ENCODE measurements at regions of chr5 and their contacts with region 1.

Region 1: GRCh38 chr5:126776497-126777256 is at the start of gene LMNB1:
- DNase-seq: peak; percentile 96
- H3K4me3 ChIP-seq: peak within 1 kb of the TSS; percentile 63 to 74 (median 67)
- H3K27ac ChIP-seq: peak within 1 kb of the TSS; percentile 92 to 96 (median 94)
- H3K4me1 ChIP-seq: peaks cover 0 to 31% (median 18%) of the 10 kb centered on the region in 4 donors
- H3K27me3 ChIP-seq: no peaks in the 10 kb centered on the region
- CTCF ChIP-seq: peak in 2 of 5 experiments; percentile 12 to 44
- EP300 ChIP-seq: no peak
- POLR2A ChIP-seq: peak; percentile 61
- total RNA-seq, gene LMNB1: 7.9 to 53.3 (median 16.8) TPM

Region 2: GRCh38 chr5:126339215-126339805 is 437.4 kb before region 1 on chr5:
- in situ Hi-C with region 1: loop called in 2 of 4 experiments (anchors 25 kb)
- intact Hi-C with region 1: no loop called
- DNase-seq: peak; percentile 38
- H3K4me3 ChIP-seq: no peak overlapping the region
- H3K27ac ChIP-seq: no peak overlapping the region
- H3K4me1 ChIP-seq: peaks cover 0 to 4% (median 0%) of the 10 kb centered on the region in 4 donors
- H3K27me3 ChIP-seq: no peaks in the 10 kb centered on the region
- CTCF ChIP-seq: peak; percentile 86 to 89 (median 88)
- EP300 ChIP-seq: no peak
- POLR2A ChIP-seq: no peak

Region 3: DNA sequence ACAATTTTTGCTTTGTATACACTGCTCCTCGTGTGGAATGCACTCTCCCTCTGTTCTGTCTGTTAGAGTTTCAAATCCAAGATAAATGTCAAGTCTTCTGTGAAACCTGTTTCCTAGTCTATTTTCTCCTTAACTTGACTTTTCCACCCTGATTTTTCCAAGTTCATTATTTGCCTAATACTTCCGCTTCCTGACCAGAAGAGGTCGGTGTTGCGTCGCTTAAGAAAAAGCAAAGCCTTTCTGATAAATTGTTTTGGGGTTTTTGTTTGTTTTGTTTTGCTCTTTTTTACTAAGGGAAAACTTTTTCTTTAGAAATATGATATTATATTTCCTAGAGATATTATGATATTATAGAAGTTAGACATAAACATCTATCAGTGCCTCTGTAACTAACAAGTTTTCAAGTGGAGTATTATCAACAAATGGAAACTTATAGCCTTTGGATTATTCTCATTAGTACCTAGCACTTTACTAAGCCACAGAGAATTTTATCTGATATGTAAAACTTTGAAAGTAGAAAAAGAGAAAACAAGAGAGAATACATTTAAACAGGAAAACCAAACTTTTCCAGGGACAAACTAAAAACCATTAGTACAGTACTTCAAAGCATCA is 120.2 kb before region 1 on chr5:
- in situ Hi-C with region 1: loop called in 1 of 4 experiments (anchors 25 kb)
- intact Hi-C with region 1: no loop called
- DNase-seq: no peak
- H3K4me3 ChIP-seq: no peak overlapping the region
- H3K27ac ChIP-seq: no peak overlapping the region
- H3K4me1 ChIP-seq: peaks cover 0 to 15% (median 5%) of the 10 kb centered on the region in 4 donors
- H3K27me3 ChIP-seq: no peaks in the 10 kb centered on the region
- CTCF ChIP-seq: peak; percentile 71 to 81 (median 79)
- EP300 ChIP-seq: no peak
- POLR2A ChIP-seq: no peak

Region 4: DNA sequence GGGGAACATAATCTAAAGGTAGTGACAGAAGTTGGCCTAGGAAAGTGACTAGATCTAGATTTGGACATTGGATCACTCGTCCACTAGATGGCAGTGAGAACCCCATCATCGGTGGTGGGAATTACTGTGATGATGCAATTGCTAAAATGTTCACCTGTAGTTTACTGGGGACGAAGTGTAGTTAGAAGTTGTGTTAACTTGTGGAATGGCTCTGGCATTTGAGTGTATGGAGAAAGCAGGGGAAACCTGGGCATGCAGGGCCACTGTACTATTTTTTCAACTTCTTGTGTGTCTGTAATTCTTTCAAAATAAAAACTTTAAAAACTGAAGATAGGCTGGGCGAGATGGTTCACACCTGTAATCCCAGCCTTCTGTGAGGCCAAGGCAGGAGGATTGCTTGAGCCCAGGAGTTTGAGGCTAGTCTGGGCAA is 100.5 kb before region 1 on chr5:
- in situ Hi-C with region 1: loop called in 3 of 4 experiments (anchors 5 to 25 kb)
- intact Hi-C with region 1: loop called (anchors 2 kb)
- DNase-seq: peak; percentile 69
- H3K4me3 ChIP-seq: no peak overlapping the region
- H3K27ac ChIP-seq: no peak overlapping the region
- H3K4me1 ChIP-seq: peaks cover 0 to 32% (median 8%) of the 10 kb centered on the region in 4 donors
- H3K27me3 ChIP-seq: no peaks in the 10 kb centered on the region
- CTCF ChIP-seq: peak; percentile 76 to 90 (median 80)
- EP300 ChIP-seq: no peak
- POLR2A ChIP-seq: no peak

Region 5: DNA sequence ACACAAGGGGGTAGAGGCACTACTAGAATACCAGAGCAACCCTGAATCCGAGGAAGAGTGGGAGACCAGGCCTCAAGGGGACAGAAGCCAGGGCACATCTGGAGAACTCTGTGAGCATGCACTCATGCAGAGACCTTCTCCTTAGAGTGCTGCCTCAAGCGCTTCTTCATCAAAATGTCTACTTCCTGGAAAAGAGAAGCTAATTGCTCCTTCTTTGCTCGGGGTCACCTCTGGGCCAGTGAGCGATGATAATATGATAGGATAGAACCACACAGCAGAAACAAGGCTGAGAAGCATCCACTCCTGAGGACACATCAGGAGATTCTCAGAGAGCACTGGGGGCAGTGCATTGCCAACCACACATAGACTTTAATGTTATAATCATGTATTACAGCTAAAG is 23.4 kb before region 1 on chr5:
- in situ Hi-C with region 1: no loop called
- intact Hi-C with region 1: no loop called
- DNase-seq: no peak
- H3K4me3 ChIP-seq: no peak overlapping the region
- H3K27ac ChIP-seq: no peak overlapping the region
- H3K4me1 ChIP-seq: no peaks in the 10 kb centered on the region
- H3K27me3 ChIP-seq: no peaks in the 10 kb centered on the region
- CTCF ChIP-seq: no peak
- EP300 ChIP-seq: no peak
- POLR2A ChIP-seq: no peak

Region 6: DNA sequence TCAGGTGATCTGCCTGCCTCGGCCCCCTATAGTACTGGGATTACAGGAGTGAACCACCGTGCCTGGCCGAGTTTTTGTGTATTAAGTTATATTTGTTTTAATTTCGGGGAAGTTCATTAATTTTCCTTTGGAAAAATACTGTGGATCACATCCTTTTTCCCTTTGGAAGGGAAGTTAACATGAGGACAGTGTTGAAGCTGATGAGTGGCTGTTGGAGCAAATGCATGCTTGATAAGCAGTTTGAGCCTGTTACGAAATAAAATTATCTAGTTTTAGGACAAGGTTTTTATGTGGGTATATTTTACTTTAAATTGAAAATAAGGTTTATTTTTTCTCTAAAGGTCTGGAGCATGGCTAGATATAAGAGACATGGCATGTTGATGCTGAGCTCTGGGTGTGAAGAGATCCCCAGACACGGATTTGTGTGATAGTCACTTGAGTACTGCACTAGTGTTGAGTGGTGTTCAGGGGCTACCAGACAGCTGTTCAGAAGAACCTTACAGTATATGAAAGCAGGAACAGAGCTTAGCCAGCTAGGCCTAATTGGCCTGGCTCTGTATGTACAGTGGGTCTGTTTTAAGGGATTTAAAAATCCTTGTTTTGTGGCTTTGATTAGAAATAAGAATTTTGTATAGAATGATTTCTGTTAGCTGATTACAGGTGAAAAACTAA is 17.6 kb after region 1 on chr5:
- in situ Hi-C with region 1: no loop called
- intact Hi-C with region 1: no loop called
- DNase-seq: no peak
- H3K4me3 ChIP-seq: no peak overlapping the region
- H3K27ac ChIP-seq: no peak overlapping the region
- H3K4me1 ChIP-seq: no peaks in the 10 kb centered on the region
- H3K27me3 ChIP-seq: no peaks in the 10 kb centered on the region
- CTCF ChIP-seq: no peak
- EP300 ChIP-seq: no peak
- POLR2A ChIP-seq: no peak

Measured in transverse colon (tissue), 4 donors.